ENCODE measurements at regions of chr1 and their contacts with region 1.

Region 1: GRCh38 chr1:161749509-161750407 is at the start of gene DUSP12:
- DNase-seq: peak; percentile 93
- H3K4me3 ChIP-seq: peak within 1 kb of the TSS; percentile 52 to 89 (median 71)
- H3K27ac ChIP-seq: peak within 1 kb of the TSS; percentile 85 to 95 (median 86)
- H3K4me1 ChIP-seq: peaks cover 4 to 20% (median 11%) of the 10 kb centered on the region in 4 donors
- H3K27me3 ChIP-seq: peaks cover 19% of the 10 kb centered on the region
- CTCF ChIP-seq: peak in 1 of 5 experiments; percentile 16
- EP300 ChIP-seq: no peak
- POLR2A ChIP-seq: peak; percentile 53
- total RNA-seq, gene DUSP12: 26.2 to 62.5 (median 28.4) TPM in 3 of 4 donors, not detected in the other

Region 2: DNA sequence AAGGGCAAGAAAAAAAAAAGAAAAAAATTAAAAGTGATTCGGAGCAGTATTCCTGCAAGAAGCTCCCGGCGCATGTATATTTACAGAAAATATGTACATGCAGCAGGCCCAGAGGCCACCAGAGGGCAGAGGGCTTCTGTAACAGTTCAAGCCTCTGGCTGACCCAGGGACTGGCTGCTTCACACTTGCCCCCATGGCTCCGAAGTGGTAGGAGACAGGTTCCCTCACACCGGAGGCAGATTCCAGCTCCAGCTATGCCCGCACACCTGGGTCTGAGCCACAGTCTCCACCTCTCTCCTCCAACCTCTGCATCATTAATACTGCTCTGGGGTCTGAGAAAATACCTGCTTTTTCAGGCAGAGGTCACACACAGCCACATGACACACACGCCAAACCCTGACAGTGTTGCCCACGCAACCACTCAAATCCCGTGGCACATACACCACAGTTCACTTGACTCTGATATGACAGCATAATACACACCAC is 677.8 kb before region 1 on chr1:
- in situ Hi-C with region 1: loop called in 1 of 4 experiments (anchors 25 kb)
- intact Hi-C with region 1: no loop called
- DNase-seq: peak; percentile 65
- H3K4me3 ChIP-seq: no peak overlapping the region
- H3K27ac ChIP-seq: no peak overlapping the region
- H3K4me1 ChIP-seq: peaks cover 0 to 5% (median 2%) of the 10 kb centered on the region in 4 donors
- H3K27me3 ChIP-seq: no peaks in the 10 kb centered on the region
- CTCF ChIP-seq: peak; percentile 41 to 73 (median 59)
- EP300 ChIP-seq: no peak
- POLR2A ChIP-seq: no peak

Region 3: DNA sequence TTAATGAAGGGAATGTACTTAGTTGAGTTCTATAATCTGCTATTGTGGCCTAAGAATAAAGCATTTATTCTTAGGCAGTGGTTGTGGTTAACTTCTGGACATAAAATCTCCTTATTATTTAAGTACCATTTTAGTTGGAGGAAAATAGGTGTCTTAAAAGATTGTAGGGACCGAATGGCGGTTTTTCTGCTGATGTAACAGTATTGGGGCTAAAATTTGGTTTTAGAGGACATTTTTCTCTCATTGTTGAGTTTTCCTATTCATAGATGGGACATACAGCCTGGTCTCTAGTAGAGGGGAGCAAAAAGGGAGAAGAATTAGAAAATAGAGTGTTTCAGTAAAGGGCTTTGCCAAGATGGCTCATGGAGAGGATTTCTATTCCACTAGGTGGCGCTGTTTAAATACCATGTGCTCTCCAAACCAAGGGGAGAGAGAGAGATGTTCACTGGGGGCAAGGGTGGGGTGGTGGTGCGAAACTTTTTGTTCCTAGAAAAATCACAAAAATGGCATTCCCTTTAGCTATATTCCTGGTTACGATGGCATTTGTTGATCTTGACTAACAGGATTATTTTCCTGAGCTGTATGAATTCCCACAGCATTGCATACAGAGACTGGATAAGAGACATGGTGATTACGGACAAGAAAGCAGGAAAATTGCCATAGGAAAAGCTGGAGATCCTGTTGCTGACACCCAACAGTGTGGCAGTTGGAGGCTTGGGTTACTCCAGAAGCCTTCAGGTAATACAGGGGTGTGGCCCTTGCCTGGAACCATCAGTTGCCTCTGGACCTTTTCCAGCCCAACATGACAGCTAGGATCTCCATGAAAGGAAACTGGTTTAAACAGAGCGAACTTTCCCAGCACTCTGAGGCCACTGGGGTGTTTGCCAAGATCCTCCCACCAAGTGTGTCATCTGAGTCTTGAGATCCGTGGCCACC is 262.7 kb before region 1 on chr1:
- in situ Hi-C with region 1: loop called in 3 of 4 experiments (anchors 10 kb)
- intact Hi-C with region 1: no loop called
- DNase-seq: peak; percentile 34
- H3K4me3 ChIP-seq: peak overlapping the region in 1 of 4 donors; percentile 9
- H3K27ac ChIP-seq: no peak overlapping the region
- H3K4me1 ChIP-seq: peaks cover 0 to 6% (median 2%) of the 10 kb centered on the region in 4 donors
- H3K27me3 ChIP-seq: peaks cover 52% of the 10 kb centered on the region
- CTCF ChIP-seq: peak; percentile 69 to 87 (median 77)
- EP300 ChIP-seq: no peak
- POLR2A ChIP-seq: no peak

Region 4: GRCh38 chr1:161549652-161550051 is 200.1 kb before region 1 on chr1 and contains the start of gene FCGR3A:
- in situ Hi-C with region 1: loop called in 1 of 4 experiments (anchors 25 kb)
- intact Hi-C with region 1: no loop called
- DNase-seq: no peak
- H3K4me3 ChIP-seq: no peak within 1 kb of the TSS
- H3K27ac ChIP-seq: no peak within 1 kb of the TSS
- H3K4me1 ChIP-seq: peaks cover 0 to 3% (median 0%) of the 10 kb centered on the region in 4 donors
- H3K27me3 ChIP-seq: no peaks in the 10 kb centered on the region
- CTCF ChIP-seq: no peak
- EP300 ChIP-seq: no peak
- POLR2A ChIP-seq: no peak
- total RNA-seq, gene FCGR3A: 0.75 to 21.7 (median 5.3) TPM

Region 5: DNA sequence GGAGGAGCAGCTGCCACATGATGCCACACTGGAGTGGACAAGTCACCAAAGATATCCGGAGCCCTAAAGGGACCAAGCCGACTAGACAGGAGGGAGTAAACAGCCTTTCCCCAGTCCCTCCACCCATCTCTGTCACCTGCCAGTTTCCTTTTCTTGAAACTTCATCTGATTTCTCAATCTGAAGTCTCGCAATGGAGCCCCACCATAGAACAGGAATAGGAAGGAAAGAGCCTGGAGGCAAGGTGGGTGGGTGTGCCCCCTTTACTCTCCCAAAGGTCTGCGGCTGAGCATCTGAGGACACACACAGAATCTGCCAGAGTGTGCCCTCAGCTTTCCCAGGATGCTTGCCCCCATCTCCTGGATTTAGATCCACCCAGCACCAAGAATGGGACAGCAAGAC is 118.7 kb before region 1 on chr1 and contains the start of gene FCGR3B:
- in situ Hi-C with region 1: loop called in 3 of 4 experiments (anchors 25 kb)
- intact Hi-C with region 1: no loop called
- DNase-seq: no peak
- H3K4me3 ChIP-seq: no peak within 1 kb of the TSS
- H3K27ac ChIP-seq: no peak within 1 kb of the TSS
- H3K4me1 ChIP-seq: no peaks in the 10 kb centered on the region
- H3K27me3 ChIP-seq: no peaks in the 10 kb centered on the region
- CTCF ChIP-seq: no peak
- EP300 ChIP-seq: no peak
- POLR2A ChIP-seq: no peak
- total RNA-seq, gene FCGR3B: 2.0 TPM in 1 of 4 donors, not detected in the others

Region 6: GRCh38 chr1:162117039-162117774 is 367.4 kb after region 1 on chr1:
- in situ Hi-C with region 1: no loop called
- intact Hi-C with region 1: no loop called
- DNase-seq: no peak
- H3K4me3 ChIP-seq: no peak overlapping the region
- H3K27ac ChIP-seq: no peak overlapping the region
- H3K4me1 ChIP-seq: peaks cover 0 to 4% (median 2%) of the 10 kb centered on the region in 4 donors
- H3K27me3 ChIP-seq: no peaks in the 10 kb centered on the region
- CTCF ChIP-seq: no peak
- EP300 ChIP-seq: no peak
- POLR2A ChIP-seq: no peak

Region 7: DNA sequence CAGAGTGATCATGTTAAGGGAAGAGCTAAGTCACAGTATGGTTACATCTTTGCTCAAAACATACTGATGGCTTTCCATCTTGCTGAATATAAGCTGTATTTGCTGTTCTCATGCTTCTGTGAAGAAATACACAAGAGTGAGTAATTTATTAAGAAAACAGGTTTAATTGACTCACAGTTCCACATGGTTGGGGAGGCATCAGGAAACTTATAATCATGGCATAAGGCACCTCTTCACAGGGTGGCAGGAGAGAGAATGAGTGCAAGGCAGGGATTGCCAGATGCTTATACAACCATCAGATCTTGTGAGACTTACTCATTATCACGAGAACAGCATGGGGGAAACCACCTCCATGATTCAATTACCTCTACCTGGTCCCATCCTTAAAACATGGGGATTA is 1477.4 kb after region 1 on chr1:
- in situ Hi-C with region 1: no loop called
- intact Hi-C with region 1: no loop called
- DNase-seq: no peak
- H3K4me3 ChIP-seq: no peak overlapping the region
- H3K27ac ChIP-seq: no peak overlapping the region
- H3K4me1 ChIP-seq: no peaks in the 10 kb centered on the region
- H3K27me3 ChIP-seq: no peaks in the 10 kb centered on the region
- CTCF ChIP-seq: no peak
- EP300 ChIP-seq: no peak
- POLR2A ChIP-seq: no peak

Measured in transverse colon (tissue), 4 donors.